ENCODE measurements at regions of chr12 and their contacts with region 1.

Region 1: DNA sequence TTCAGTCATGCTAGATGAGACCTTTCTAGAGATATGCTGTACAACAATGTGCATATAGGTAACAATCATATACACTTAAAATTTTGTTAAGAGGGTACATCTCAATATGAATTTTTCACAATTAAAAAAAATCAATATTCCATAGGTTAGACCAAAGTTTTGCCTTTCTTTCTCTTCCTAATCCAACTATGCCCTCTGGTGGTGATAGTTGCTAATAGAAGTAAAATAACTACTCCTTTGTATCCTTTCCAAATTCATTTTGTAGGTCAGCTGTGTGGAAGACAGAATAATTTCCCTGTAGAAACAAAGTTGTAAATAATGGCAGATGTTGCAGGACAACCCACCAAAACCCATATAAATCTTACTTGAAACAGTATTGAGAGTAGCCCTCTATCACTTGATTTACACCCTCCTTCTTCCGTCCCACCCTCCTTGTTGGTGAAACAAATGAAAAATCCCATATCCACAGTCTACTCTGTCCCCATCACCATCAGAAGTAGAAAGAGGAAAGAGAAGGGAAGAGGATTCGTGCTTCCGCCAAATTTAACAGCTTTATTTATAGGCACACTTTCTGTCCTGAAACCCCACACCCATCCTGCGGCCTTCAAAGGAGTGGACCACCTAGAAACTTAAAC is 34.2 kb upstream of the KICS2 start:
- DNase-seq: no peak
- H3K4me3 ChIP-seq: peak overlapping the region in 24 of 59 donors; percentile 1 to 44 (median 23)
- H3K27ac ChIP-seq: peak overlapping the region in 47 of 59 donors; percentile 4 to 88 (median 65)
- H3K27me3 ChIP-seq: no peaks in the 10 kb centered on the region
- CTCF ChIP-seq: peak; percentile 66 to 96 (median 82)

Region 2: GRCh38 chr12:63814146-63814772 is 442.0 kb before region 1 on chr12:
- intact Hi-C with region 1: no loop called
- DNase-seq: no peak
- H3K4me3 ChIP-seq: no peak overlapping the region
- H3K27ac ChIP-seq: no peak overlapping the region
- H3K27me3 ChIP-seq: no peaks in the 10 kb centered on the region
- CTCF ChIP-seq: no peak

Region 3: DNA sequence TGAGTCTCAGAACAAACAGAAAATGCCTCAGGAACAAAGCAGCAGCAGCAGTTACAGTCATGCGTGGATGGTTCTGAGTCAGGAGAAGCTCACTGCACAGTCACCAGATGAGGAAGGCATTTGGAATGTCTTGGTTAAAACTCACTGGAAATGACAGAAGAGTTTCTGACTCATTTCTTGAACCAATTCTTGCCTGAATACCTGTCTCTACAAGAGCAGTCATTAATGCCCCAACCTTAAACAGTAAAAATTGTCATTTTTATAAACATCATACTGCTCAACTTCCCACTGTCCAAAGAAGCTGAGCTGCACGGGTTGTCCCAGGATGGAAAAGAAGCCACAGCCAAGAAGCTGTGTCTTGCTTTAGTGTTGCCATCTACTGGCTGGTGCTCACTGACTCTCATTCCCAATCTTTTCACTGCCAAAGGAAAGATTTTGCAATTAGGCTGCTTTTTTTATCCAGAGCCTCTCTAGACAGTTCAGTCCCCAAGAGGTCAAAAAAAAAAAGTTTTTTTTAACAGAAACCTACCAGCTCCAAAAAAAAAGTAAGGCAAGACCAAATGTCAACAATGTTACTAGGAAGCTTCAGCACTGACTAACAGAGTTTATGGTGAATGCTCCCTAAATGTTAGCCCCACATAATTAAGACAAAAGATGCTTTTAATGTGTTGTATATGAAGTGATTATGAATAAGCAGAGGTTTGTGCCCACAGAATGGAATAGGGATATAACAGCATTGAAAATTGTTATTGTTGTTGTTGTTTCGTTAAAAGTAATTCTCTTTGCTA is 74.6 kb before region 1 on chr12:
- intact Hi-C with region 1: loop called in 1 of 2 experiments (anchors 2 kb)
- DNase-seq: peak in 9 of 10 donors; percentile 5 to 72 (median 49)
- H3K4me3 ChIP-seq: peak overlapping the region in 1 of 59 donors; percentile 1
- H3K27ac ChIP-seq: peak overlapping the region in 14 of 59 donors; percentile 7 to 54 (median 30)
- H3K27me3 ChIP-seq: no peaks in the 10 kb centered on the region
- CTCF ChIP-seq: peak; percentile 45 to 87 (median 75)

Measured in dorsolateral prefrontal cortex (tissue), 120 donors.